SK-N-SH (cell line): ENCODE measurements at regions of chr5 and their contacts with region 1.

Region 1: GRCh38 chr5:151447174-151448037 is at the start of gene SLC36A1:
- DNase-seq: peak; percentile 93
- H3K4me3 ChIP-seq: peak within 1 kb of the TSS; percentile 79 to 94
- H3K27ac ChIP-seq: peak within 1 kb of the TSS; percentile 28 to 62; a peak in 2 of 4 replicates
- H3K4me1 ChIP-seq: peaks cover 0 to 19% of the 10 kb centered on the region in 2 experiments; a peak in 1 of 4 replicates
- H3K27me3 ChIP-seq: no peaks in the 10 kb centered on the region
- CTCF ChIP-seq: peak; percentile 93
- EP300 ChIP-seq: no peak; a peak in 1 of 4 replicates
- RAD21 ChIP-seq: peak; percentile 84
- polyA plus RNA-seq, gene SLC36A1: 4.1 and 6.3 TPM in 2 replicates

Region 2: GRCh38 chr5:151432210-151432609 is 15.2 kb before region 1 on chr5:
- CTCF ChIA-PET with region 1: interaction called, 15 read pairs
- POLR2A ChIA-PET with region 1: no interaction called
- DNase-seq: no peak
- H3K4me3 ChIP-seq: no peak overlapping the region
- H3K27ac ChIP-seq: no peak overlapping the region
- H3K4me1 ChIP-seq: no peaks in the 10 kb centered on the region
- H3K27me3 ChIP-seq: no peaks in the 10 kb centered on the region
- CTCF ChIP-seq: no peak
- EP300 ChIP-seq: no peak
- RAD21 ChIP-seq: no peak

Region 3: GRCh38 chr5:151477101-151477500 is 29.7 kb after region 1 on chr5:
- CTCF ChIA-PET with region 1: interaction called, 28 read pairs
- POLR2A ChIA-PET with region 1: interaction called, 5 read pairs
- DNase-seq: no peak
- H3K4me3 ChIP-seq: no peak overlapping the region
- H3K27ac ChIP-seq: no peak overlapping the region
- H3K4me1 ChIP-seq: peaks cover 13% of the 10 kb centered on the region in 2 experiments
- H3K27me3 ChIP-seq: no peaks in the 10 kb centered on the region
- CTCF ChIP-seq: no peak
- EP300 ChIP-seq: no peak
- RAD21 ChIP-seq: no peak

Region 4: DNA sequence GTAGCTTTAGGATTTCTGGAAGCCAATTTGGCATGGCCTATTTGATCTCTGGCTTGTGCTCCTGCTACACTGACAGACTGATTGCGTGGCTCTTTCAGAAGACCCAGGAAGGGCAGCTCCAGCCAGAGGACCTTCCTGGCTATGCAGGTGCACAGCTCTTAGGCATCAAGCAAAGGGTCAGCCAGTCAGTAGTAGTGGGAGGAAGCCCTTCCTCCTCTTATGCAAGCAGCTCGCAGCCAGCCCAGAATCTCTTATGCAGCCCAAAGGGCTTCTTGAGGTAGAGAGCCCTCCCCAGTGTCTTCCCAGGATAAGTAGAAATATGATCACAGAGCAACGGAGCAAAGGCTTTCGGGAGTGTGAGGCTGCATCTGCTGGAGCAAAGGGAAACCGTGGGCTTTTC is 43.2 kb after region 1 on chr5:
- CTCF ChIA-PET with region 1: interaction called, 27 read pairs
- POLR2A ChIA-PET with region 1: no interaction called
- DNase-seq: no peak
- H3K4me3 ChIP-seq: no peak overlapping the region
- H3K27ac ChIP-seq: no peak overlapping the region
- H3K4me1 ChIP-seq: no peaks in the 10 kb centered on the region
- H3K27me3 ChIP-seq: no peaks in the 10 kb centered on the region
- CTCF ChIP-seq: no peak
- EP300 ChIP-seq: no peak
- RAD21 ChIP-seq: no peak

Region 5: GRCh38 chr5:151509231-151509630 is 61.8 kb after region 1 on chr5:
- CTCF ChIA-PET with region 1: interaction called, 108 read pairs
- POLR2A ChIA-PET with region 1: no interaction called
- DNase-seq: no peak
- H3K4me3 ChIP-seq: no peak overlapping the region
- H3K27ac ChIP-seq: no peak overlapping the region
- H3K4me1 ChIP-seq: no peaks in the 10 kb centered on the region
- H3K27me3 ChIP-seq: no peaks in the 10 kb centered on the region
- CTCF ChIP-seq: no peak
- EP300 ChIP-seq: no peak
- RAD21 ChIP-seq: no peak

Region 6: DNA sequence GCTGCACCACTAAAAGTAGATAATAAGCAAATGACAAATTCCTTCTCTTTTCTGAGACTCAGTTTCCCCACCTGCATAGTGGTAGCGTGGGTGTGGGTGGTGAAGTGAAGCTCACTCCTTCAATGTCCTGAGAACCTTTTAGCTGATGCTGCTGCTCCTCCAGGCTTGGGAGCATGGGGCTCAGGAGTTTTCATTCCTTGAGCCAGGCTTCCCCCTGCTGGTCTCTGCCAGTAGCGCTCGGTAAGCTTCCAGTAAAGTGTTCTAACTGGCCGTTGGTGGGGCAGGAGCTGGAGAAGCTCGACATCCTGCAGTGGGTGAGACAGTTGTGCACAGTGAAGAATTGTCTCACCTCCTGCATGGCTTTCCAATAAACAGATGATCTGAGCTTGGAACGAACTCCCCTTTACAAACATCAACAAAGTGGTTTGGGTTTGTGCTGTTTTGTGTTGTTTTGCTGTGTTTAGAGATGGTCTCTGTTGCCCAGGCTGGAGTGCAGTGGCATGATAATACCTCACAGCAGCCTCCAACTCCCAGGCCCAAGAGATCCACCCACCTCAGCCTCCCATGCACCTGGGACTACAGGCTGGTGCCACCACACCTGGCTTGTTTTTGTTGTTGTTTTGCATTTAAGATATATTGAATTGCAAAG is 204.7 kb after region 1 on chr5:
- CTCF ChIA-PET with region 1: interaction called, 162 read pairs
- POLR2A ChIA-PET with region 1: interaction called, 6 read pairs
- DNase-seq: peak; percentile 82
- H3K4me3 ChIP-seq: peak overlapping the region in 1 of 2 experiments; percentile 1; a peak in 1 of 4 replicates
- H3K27ac ChIP-seq: no peak overlapping the region
- H3K4me1 ChIP-seq: no peaks in the 10 kb centered on the region
- H3K27me3 ChIP-seq: peaks cover under 1% of the 10 kb centered on the region; the same call in 1 of the 2 replicates
- CTCF ChIP-seq: peak; percentile 80
- EP300 ChIP-seq: no peak
- RAD21 ChIP-seq: peak; percentile 96